Endothelial cell of umbilical vein (primary cell): ENCODE measurements at regions of chr3 and their contacts with region 1.

Region 1: GRCh38 chr3:65894679-65895453 is 143.9 kb downstream of the MAGI1 start:
- DNase-seq: no peak
- H3K4me3 ChIP-seq: no peak overlapping the region
- H3K27ac ChIP-seq: no peak overlapping the region
- H3K4me1 ChIP-seq: peaks cover 17% of the 10 kb centered on the region
- H3K27me3 ChIP-seq: no peaks in the 10 kb centered on the region
- CTCF ChIP-seq: no peak
- POLR2A ChIP-seq: no peak

Region 2: DNA sequence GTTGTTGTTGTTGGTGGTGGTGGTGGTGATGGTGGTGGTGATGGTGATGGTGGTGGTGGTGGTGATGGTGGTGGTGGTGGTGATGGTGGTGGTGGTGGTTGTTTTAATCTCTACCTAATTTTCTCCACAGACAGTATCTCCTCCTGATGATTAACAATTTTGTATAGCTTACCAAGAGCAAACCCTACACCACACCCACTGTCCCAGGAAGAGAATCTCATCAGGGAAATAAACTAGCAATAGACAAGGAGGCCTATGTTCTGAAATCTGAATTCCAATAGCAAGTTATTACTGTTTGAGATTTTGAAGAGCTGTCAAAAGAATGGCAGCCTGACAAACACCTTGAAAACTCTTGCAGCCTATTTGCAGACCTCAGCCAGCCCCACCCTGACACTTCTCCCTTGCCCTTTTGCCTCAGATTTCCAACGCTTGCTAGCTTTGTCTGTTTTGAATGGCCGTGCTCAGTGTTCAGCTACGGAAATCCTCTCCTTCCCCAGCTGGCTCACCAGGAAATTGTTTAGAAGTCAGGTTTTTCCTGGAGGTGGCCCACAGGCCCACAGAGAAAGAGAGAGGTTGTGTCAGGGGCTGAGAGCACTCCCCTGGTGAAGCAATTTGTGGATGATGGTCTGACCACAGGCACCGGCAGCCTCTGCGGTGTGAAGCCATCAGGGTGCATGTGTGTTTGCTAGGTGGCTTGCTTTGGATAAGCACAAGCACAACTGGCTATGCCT is 42.2 kb after region 1 on chr3:
- CTCF ChIA-PET with region 1: interaction called, 3 read pairs
- POLR2A ChIA-PET with region 1: no interaction called
- dilution Hi-C with region 1: no loop called
- intact Hi-C with region 1: loop called (anchors 5 kb)
- DNase-seq: peak; percentile 82
- H3K4me3 ChIP-seq: no peak overlapping the region
- H3K27ac ChIP-seq: no peak overlapping the region
- H3K4me1 ChIP-seq: peaks cover 29% of the 10 kb centered on the region
- H3K27me3 ChIP-seq: no peaks in the 10 kb centered on the region
- CTCF ChIP-seq: no peak
- POLR2A ChIP-seq: no peak

Region 3: DNA sequence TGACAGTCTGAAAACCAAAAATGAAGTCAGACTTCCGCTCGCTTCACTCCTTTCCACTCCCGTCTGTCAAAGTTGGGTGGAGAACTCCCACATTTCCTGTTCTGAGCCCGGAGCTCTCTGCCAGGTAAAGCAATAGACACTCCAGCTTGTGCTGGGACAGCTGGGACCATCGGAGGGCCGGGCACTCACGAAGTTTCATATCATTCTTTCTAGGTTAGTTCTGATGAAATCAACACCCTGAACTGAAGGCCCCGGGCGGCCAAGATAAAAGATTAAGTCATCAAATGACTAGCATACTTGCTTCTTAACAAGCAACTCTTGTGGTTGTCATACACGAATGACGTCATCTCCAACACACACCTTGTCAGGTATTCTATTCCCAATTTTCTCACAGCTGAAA is 101.7 kb after region 1 on chr3:
- CTCF ChIA-PET with region 1: no interaction called
- POLR2A ChIA-PET with region 1: no interaction called
- dilution Hi-C with region 1: no loop called
- intact Hi-C with region 1: no loop called
- DNase-seq: no peak
- H3K4me3 ChIP-seq: no peak overlapping the region
- H3K27ac ChIP-seq: no peak overlapping the region
- H3K4me1 ChIP-seq: peaks cover 46% of the 10 kb centered on the region
- H3K27me3 ChIP-seq: no peaks in the 10 kb centered on the region
- CTCF ChIP-seq: no peak
- POLR2A ChIP-seq: no peak